ENCODE measurements at regions of chr1 and their contacts with region 1.

Region 1: GRCh38 chr1:152654110-152654509 is 9.1 kb upstream of the LCE2D start:
- DNase-seq: peak; percentile 69
- H3K4me3 Mint-ChIP-seq: no peak overlapping the region
- H3K27ac Mint-ChIP-seq: no peak overlapping the region
- H3K4me1 Mint-ChIP-seq: peaks cover 3% of the 10 kb centered on the region
- H3K27me3 Mint-ChIP-seq: peaks cover 9% of the 10 kb centered on the region

Region 2: DNA sequence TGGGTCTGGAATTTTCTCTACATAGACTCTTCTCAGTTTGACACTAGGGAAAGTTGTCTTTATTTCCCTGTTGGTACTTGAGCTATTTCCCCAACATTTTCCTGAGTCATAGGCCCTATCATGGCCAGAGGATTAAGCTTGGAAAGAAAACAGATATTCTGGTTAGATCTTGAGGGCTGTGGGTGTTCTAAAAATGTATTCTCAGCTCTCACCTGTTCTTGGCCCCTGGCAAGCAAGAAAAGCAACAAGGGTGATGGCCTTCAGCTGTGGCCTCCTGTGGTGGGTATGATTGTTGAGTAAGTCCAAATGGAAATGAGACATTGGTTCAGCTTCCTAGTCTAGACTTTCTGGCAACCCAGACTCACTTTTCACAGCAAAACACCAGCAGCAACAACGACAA is 13.8 kb before region 1 on chr1:
- CTCF ChIA-PET with region 1: interaction called, 10 read pairs
- POLR2A ChIA-PET with region 1: interaction called, 3 read pairs
- intact Hi-C with region 1: no loop called
- DNase-seq: no peak
- H3K4me3 Mint-ChIP-seq: no peak overlapping the region
- H3K27ac Mint-ChIP-seq: no peak overlapping the region
- H3K4me1 Mint-ChIP-seq: no peaks in the 10 kb centered on the region
- H3K27me3 Mint-ChIP-seq: peaks cover 4% of the 10 kb centered on the region

Region 3: GRCh38 chr1:152667648-152668047 is 13.5 kb after region 1 on chr1:
- CTCF ChIA-PET with region 1: interaction called, 10 read pairs
- POLR2A ChIA-PET with region 1: no interaction called
- intact Hi-C with region 1: no loop called
- DNase-seq: no peak
- H3K4me3 Mint-ChIP-seq: no peak overlapping the region
- H3K27ac Mint-ChIP-seq: no peak overlapping the region
- H3K4me1 Mint-ChIP-seq: no peaks in the 10 kb centered on the region
- H3K27me3 Mint-ChIP-seq: peaks cover 4% of the 10 kb centered on the region

Region 4: GRCh38 chr1:153220606-153221303 is 566.6 kb after region 1 on chr1:
- CTCF ChIA-PET with region 1: interaction called, 3 read pairs
- POLR2A ChIA-PET with region 1: no interaction called
- intact Hi-C with region 1: loop called (anchors 2 kb)
- DNase-seq: no peak
- H3K4me3 Mint-ChIP-seq: no peak overlapping the region
- H3K27ac Mint-ChIP-seq: no peak overlapping the region
- H3K4me1 Mint-ChIP-seq: no peaks in the 10 kb centered on the region
- H3K27me3 Mint-ChIP-seq: peaks cover 8% of the 10 kb centered on the region